ENCODE measurements at regions of chr15 and their contacts with region 1.

Region 1: DNA sequence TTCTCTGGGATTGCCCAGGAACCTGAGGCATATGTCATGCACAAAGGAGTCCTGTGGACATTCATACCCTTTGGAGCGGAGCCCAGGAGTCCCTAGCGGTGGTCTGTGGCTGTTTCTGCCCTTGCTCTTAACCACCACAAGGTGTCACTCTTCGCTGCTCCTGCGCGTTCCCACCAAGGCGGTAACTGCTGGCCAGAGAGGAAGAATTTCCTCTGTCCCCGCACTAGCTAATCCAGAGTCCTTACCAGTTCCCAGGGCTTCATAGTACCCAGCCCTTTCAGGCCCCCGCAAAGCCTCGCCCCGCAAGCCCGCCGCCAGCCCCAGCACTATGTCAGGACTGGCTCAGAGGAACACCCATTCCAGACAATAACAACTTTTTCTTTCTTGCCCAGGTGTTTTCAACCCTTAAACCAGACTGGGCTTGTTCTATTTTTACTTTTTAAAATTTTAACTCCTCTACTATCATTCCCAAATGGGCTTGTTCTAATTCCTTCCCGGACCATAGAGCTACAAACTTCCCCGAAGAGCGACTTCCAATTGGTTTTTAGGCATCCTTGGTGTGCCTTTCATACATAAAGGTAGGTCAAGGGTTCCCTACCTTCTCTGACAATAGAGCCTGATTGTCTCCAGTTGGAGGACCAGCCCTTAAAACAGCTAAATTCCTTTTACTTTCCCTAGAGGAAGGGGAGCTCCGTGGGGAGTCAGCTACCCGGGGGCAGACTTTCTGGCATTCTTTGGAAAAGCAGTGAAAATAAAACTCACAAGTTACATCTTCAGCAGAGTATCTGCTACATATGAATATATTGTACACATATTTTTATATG is 31.8 kb upstream of the ZNF774 start:
- DNase-seq: peak; percentile 58
- H3K4me3 ChIP-seq: 0 out of 2 replicates have a peak overlapping the region, but pooled peaks have one; percentile 12
- CTCF ChIP-seq: peak; percentile 98

Region 2: GRCh38 chr15:90249203-90249863 is 70.9 kb before region 1 on chr15 and contains the start of gene TTLL13:
- CTCF ChIA-PET with region 1: no interaction called
- POLR2A ChIA-PET with region 1: no interaction called
- DNase-seq: peak; percentile 12
- H3K4me3 ChIP-seq: peak within 1 kb of the TSS; percentile 70
- CTCF ChIP-seq: no peak

Region 3: DNA sequence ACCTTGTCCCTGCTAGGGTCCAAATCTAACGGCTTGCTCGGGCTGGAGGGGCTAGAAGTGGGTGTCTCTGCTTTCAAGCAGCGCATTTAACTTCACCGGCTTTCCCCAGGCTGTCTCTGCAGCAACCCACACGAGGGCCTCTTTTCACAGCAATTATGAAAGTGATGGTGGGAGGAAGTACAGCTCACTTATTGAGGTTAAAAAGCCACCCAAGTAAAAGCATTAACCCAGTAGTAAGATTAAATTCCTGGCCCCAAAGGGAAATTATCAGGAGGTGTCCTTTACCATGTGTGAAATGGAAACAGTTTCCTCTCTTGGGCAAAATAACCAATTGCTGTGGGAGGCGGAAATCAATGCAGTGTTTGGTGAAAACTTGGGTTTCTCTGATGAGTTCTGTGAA is 13.7 kb before region 1 on chr15:
- CTCF ChIA-PET with region 1: interaction called, 86 read pairs
- POLR2A ChIA-PET with region 1: no interaction called
- DNase-seq: no peak
- H3K4me3 ChIP-seq: no peak overlapping the region
- CTCF ChIP-seq: no peak

Region 4: GRCh38 chr15:90436952-90437351 is 116.7 kb after region 1 on chr15:
- CTCF ChIA-PET with region 1: interaction called, 16 read pairs
- POLR2A ChIA-PET with region 1: no interaction called
- DNase-seq: no peak
- H3K4me3 ChIP-seq: no peak overlapping the region
- CTCF ChIP-seq: no peak

Region 5: DNA sequence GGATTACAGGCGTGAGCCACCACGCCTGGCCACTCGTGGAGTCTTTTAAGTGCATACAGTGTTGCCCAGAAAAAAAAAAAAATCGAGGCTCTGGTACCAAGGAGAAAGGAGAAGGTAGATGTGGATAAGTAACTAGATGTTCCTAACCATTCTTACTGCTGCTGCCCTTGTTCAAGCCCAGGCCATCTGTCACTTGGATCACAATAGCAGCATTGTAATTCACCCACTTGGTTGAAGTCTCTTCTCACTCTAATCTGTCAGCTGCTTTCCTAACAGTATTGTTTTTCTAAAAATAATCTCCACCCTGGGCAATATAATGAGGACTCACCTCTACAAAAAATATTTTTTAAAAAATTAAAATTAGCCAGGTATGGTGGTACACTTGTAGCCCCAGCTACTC is 151.5 kb after region 1 on chr15:
- CTCF ChIA-PET with region 1: interaction called, 356 read pairs
- POLR2A ChIA-PET with region 1: no interaction called
- DNase-seq: no peak
- H3K4me3 ChIP-seq: no peak overlapping the region
- CTCF ChIP-seq: no peak

Region 6: GRCh38 chr15:90512981-90513380 is 192.7 kb after region 1 on chr15:
- CTCF ChIA-PET with region 1: interaction called, 22 read pairs
- POLR2A ChIA-PET with region 1: no interaction called
- DNase-seq: no peak
- H3K4me3 ChIP-seq: no peak overlapping the region
- CTCF ChIP-seq: no peak